CD8-positive, alpha-beta T cell (primary cell): ENCODE measurements at regions of chr14 and their contacts with region 1.

Region 1: DNA sequence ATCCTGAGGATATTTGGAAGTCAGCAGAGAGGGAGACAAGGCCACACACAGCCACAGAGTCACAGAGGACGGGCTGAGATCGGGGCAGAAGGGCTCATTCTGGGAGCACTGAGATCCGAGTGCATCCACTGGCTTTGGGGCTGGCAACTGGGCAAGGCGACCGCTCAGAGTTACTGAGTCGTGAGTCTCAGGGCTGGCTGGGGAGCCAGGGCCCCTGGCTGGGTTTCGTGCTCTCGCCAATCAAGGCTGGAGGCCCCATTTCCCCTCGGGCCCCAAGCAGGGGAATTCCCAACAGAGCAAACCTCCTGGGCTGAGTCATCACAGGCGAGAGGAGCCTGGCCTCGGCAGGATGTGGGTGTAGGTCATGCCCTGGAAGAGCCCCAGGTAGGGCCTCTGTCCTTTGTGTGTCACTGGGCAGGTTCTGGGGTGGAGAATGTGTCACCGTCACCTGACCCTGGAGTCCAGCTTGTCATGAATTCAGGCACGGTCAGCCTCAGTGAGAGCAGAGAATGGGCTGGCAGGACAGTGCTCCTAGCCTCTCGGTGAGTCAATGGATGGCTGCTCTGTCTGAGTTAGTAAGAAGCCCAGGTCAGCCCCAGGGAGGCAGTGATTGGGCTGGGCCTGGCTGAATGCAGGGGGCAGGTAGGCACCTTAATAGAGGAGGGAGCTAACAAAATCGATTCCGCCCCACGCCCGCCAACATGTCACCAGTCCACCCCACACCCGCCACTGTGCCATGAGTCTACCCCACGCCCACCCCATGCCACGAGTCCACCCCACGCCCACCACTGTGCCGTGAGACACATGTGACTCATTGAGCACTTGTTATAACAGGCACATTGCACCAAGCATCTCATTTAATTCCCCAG is 16.9 kb downstream of the ASB2 start:
- DNase-seq: peak; percentile 78 to 97 (median 91)
- ATAC-seq: peak; percentile 73
- H3K4me3 ChIP-seq: peak overlapping the region in 1 of 2 experiments; percentile 5
- H3K4me3 Mint-ChIP-seq: peak overlapping the region; percentile 53
- H3K27ac ChIP-seq: peak overlapping the region; percentile 47 to 89
- H3K27ac Mint-ChIP-seq: peak overlapping the region; percentile 97
- H3K4me1 ChIP-seq: peaks cover 97% of the 10 kb centered on the region
- H3K4me1 Mint-ChIP-seq: peaks cover 92% of the 10 kb centered on the region
- H3K27me3 ChIP-seq: no peaks in the 10 kb centered on the region
- H3K27me3 Mint-ChIP-seq: no peaks in the 10 kb centered on the region
- CTCF ChIP-seq: no peak

Region 2: GRCh38 chr14:93977790-93978581 is 18.5 kb after region 1 on chr14:
- CTCF ChIA-PET with region 1: interaction called, 37 read pairs
- POLR2A ChIA-PET with region 1: interaction called, 16 read pairs
- intact Hi-C with region 1: loop called in 1 of 2 experiments (anchors 1 kb)
- DNase-seq: peak; percentile 30 to 91 (median 65)
- ATAC-seq: peak; percentile 86
- H3K4me3 ChIP-seq: no peak overlapping the region
- H3K4me3 Mint-ChIP-seq: no peak overlapping the region
- H3K27ac ChIP-seq: peak overlapping the region in 1 of 2 experiments; percentile 49
- H3K27ac Mint-ChIP-seq: peak overlapping the region; percentile 79
- H3K4me1 ChIP-seq: peaks cover 40% of the 10 kb centered on the region
- H3K4me1 Mint-ChIP-seq: peaks cover 45% of the 10 kb centered on the region
- H3K27me3 ChIP-seq: no peaks in the 10 kb centered on the region
- H3K27me3 Mint-ChIP-seq: peaks cover 2% of the 10 kb centered on the region
- CTCF ChIP-seq: no peak

Region 3: GRCh38 chr14:94001501-94002396 is 42.3 kb after region 1 on chr14:
- CTCF ChIA-PET with region 1: interaction called, 8 read pairs
- POLR2A ChIA-PET with region 1: no interaction called
- intact Hi-C with region 1: loop called in 1 of 2 experiments (anchors 5 kb)
- DNase-seq: peak; percentile 18 to 79 (median 62)
- ATAC-seq: peak; percentile 85
- H3K4me3 ChIP-seq: no peak overlapping the region
- H3K4me3 Mint-ChIP-seq: no peak overlapping the region
- H3K27ac ChIP-seq: no peak overlapping the region
- H3K27ac Mint-ChIP-seq: no peak overlapping the region
- H3K4me1 ChIP-seq: peaks cover 6% of the 10 kb centered on the region
- H3K4me1 Mint-ChIP-seq: peaks cover 7% of the 10 kb centered on the region
- H3K27me3 ChIP-seq: peaks cover 0 to 7% of the 10 kb centered on the region in 2 experiments
- H3K27me3 Mint-ChIP-seq: peaks cover 16% of the 10 kb centered on the region
- CTCF ChIP-seq: peak; percentile 95

Region 4: DNA sequence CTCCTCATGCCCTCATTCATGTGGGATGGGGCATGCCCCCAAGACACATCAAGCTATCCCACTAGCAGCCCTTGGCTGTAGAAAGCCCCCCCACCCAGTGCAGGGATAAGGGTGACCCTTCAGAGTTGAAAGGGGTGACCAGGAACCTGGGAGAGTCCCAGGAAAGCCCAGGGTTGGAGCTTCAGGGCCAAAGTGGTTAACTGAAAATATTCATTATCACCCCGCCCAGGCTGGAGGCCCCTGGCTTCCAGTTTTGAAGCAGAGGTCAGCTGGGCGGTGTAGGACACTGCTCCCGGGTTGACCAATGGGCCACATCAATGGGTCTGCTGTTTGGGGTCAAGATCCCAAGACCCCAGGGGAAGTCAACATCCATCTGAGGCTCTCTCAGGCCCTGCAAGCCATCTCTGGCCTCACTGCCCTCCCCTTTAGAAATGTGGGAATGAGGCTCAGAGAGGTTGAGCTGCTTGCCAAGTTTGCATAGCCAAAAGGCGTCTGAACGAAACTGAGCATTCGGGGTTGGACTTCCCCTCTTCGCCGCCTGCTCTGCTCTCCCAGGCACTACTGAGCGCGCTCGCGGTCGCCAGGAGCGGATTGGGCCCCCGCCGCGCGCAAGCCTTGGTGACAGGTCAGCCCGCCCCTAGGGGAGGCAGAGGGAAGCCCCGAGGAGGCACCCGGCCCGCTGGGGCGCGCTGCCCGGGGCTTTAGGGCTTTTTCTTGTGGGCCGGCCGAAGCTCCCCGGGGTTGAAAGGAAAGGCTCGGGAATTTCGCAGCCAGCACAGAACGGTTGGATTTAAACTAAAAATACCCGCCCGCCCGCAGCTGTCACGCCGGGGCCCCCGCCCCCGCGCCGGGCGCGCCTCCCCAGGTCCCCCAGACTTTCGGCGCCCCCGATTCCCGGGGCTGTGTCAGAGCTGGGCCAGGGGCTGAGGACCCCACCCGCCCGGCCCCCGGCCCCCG is 1556.4 kb after region 1 on chr14:
- CTCF ChIA-PET with region 1: no interaction called
- POLR2A ChIA-PET with region 1: no interaction called
- intact Hi-C with region 1: loop called in 1 of 2 experiments (anchors 5 kb)
- DNase-seq: peak; percentile 62 to 94 (median 84)
- ATAC-seq: peak; percentile 85
- H3K4me3 ChIP-seq: peak overlapping the region; percentile 65 to 79
- H3K4me3 Mint-ChIP-seq: peak overlapping the region; percentile 89
- H3K27ac ChIP-seq: peak overlapping the region; percentile 59 to 64
- H3K27ac Mint-ChIP-seq: peak overlapping the region; percentile 93
- H3K4me1 ChIP-seq: peaks cover 66% of the 10 kb centered on the region
- H3K4me1 Mint-ChIP-seq: peaks cover 70% of the 10 kb centered on the region
- H3K27me3 ChIP-seq: no peaks in the 10 kb centered on the region
- H3K27me3 Mint-ChIP-seq: no peaks in the 10 kb centered on the region
- CTCF ChIP-seq: peak; percentile 46